PC-9 (cell line): ENCODE measurements at regions of chr19 and their contacts with region 1.

Region 1: DNA sequence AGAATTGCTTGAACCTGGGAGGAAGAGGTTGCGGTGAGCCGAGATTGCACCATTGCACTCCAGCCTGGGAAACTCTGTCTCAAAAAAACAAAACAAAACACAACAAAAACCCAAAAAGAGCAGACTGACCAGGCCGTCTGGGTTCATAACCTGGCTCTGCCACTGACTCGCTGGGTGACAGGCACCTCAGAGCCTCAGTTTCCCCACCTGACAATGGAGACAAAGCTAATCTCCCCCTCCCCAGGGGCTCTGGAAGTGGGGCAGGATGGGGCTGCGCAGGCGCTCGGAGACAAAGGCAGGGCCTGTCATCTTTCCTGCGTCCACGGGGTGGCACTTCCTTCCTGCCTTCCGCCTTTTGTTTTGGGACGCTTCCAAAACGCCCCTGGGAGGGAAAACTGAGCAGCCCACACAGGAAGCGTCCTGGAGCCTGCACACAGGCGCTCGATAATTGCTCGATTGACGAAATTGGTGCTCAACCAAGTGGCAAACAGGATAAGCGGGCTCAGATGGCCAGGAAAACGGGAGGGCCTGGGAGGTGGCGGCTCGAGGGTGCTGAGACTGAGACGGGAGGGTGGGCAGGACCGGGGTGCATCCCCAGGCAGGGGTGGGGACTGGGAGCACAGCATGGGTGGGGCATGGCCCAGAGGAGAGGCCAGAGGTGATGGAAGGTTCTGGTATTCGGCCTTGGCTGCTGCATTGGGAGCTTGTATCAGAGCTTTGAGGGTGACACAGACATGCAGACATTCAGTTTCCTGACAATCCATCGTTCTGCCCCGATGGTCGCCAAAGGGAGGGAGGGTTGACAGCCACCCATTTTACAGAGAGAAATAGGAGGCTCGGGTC is 17.8 kb downstream of the SPC24 start:
- DNase-seq: peak; percentile 76 to 89
- H3K4me3 ChIP-seq: peak overlapping the region; percentile 12; the same call in 1 of the 2 replicates
- H3K27ac ChIP-seq: peak overlapping the region; percentile 56
- H3K4me1 ChIP-seq: peaks cover 55% of the 10 kb centered on the region
- H3K27me3 ChIP-seq: no peaks in the 10 kb centered on the region
- CTCF ChIP-seq: peak; percentile 80

Region 2: DNA sequence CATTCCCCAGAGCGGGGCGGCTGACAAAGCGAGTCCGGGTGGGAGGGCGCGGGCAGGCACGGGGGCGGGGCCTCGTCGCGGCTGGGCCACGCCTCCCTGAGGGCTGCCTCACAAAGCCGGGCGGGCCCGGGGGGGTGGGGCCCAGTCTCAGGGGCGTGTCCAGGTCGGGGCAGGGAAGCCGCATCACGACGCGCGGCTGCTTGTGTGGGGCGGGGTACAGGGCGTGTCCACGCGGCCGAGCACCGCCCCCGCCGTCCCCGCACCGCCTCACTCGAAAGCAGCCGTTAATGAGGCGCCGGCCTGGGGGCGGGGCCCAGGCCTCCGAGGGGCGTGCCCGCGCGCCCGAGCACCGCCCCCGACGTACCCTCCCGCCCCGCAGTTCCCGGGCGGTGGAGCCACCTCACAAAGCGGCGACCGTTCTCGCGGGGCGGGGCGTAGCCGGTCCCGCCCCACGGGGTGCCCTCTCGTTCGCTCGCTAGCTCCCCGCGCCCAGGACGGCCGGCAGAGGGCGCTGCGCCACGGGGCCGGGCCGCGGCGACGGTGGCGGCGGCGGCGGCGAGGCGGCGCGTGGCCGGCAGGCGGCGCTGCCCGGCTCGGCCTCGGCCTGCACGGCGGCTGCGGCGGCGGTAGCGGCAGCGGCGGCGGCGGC is 266.7 kb before region 1 on chr19 and contains the start of gene CARM1:
- CTCF ChIA-PET with region 1: no interaction called
- POLR2A ChIA-PET with region 1: no interaction called
- intact Hi-C with region 1: loop called (anchors 5 kb)
- DNase-seq: peak; percentile 90 to 99
- H3K4me3 ChIP-seq: peak within 1 kb of the TSS; percentile 85
- H3K27ac ChIP-seq: peak within 1 kb of the TSS; percentile 9; the same call in 1 of the 2 replicates
- H3K4me1 ChIP-seq: peaks cover 17% of the 10 kb centered on the region
- H3K27me3 ChIP-seq: no peaks in the 10 kb centered on the region
- CTCF ChIP-seq: peak; percentile 45; the same call in 1 of the 2 replicates
- total RNA-seq, gene CARM1: 56.0 and 63.7 TPM in 2 replicates

Region 3: DNA sequence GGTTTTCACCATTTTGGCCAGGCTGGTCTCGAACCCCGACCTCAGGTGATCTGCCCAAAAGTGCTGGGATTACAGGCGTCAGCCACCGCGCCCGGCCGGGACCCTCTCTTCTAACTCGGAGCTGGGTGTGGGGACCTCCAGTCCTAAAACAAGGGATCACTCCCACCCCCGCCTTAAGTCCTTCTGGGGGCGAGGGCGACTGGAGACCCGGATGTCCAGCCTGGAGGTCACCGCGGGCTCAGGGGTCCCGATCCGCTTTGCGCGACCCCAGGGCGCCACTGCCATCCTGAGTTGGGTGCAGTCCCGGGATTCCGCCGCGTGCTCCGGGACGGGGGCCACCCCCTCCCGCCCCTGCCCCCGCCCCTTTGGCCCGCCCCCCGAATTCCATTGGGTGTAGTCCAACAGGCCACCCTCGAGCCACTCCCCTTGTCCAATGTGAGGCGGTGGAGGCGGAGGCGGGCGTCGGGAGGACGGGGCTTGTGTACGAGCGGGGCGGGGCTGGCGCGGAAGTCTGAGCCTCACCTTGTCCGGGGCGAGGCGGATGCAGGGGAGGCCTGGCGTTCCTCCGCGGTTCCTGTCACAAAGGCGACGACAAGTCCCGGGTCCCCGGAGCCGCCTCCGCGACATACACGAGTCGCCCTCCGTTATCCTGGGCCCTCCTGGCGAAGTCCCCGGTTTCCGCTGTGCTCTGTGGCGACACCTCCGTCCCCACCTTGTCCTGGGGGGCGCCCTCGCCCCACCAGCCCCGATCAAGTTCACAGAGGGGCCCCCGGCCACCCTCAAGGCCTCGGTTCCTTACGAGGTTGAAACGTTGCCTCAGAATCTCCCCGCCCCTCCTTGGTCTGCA is 47.5 kb before region 1 on chr19:
- CTCF ChIA-PET with region 1: no interaction called
- POLR2A ChIA-PET with region 1: no interaction called
- intact Hi-C with region 1: loop called (anchors 5 kb)
- DNase-seq: peak; percentile 93 to 96
- H3K4me3 ChIP-seq: peak overlapping the region; percentile 90
- H3K27ac ChIP-seq: peak overlapping the region; percentile 98
- H3K4me1 ChIP-seq: peaks cover 68% of the 10 kb centered on the region
- H3K27me3 ChIP-seq: no peaks in the 10 kb centered on the region
- CTCF ChIP-seq: no peak

Region 4: DNA sequence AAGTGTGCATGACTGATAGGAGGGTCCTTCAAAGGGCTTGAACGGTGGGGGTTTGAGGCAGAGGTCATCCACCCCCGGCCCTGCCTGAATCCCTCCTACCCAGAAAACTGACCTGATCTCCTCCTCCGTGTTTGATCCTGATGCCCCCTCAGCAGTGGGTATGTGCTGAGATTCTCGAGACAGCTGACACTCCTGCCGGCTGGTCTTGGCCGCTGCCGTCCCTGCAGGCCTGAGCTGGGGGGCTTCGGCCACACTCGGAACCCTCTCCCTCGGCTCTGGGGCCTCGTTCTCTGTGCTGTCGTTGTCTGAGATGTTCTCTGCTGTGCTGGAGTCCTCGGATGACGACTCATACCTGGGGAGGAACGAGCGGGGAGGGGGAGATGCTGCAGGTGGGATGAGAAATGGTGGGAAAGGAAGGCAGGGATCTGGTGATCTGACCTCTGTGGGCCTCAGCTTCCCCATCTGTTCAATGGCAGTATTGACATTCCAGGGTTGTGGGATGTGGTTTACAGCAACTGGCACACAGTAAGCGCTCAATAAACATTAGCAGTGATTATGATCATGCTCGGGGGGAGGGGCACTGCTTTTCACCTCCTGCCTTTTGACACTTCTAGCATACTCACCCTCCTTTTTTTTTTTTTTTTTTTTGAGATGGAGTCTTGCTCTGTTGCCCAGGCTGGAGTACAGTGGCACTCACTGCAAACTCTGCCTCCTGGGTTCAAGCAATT is 38.9 kb after region 1 on chr19:
- CTCF ChIA-PET with region 1: interaction called, 11 read pairs
- POLR2A ChIA-PET with region 1: no interaction called
- intact Hi-C with region 1: no loop called
- DNase-seq: no peak
- H3K4me3 ChIP-seq: no peak overlapping the region
- H3K27ac ChIP-seq: no peak overlapping the region
- H3K4me1 ChIP-seq: no peaks in the 10 kb centered on the region
- H3K27me3 ChIP-seq: no peaks in the 10 kb centered on the region
- CTCF ChIP-seq: no peak

Region 5: GRCh38 chr19:11203194-11204075 is 65.7 kb after region 1 on chr19:
- CTCF ChIA-PET with region 1: interaction called, 17 read pairs
- POLR2A ChIA-PET with region 1: no interaction called
- intact Hi-C with region 1: loop called (anchors 1 kb)
- DNase-seq: peak; percentile 69 to 75
- H3K4me3 ChIP-seq: no peak overlapping the region
- H3K27ac ChIP-seq: no peak overlapping the region
- H3K4me1 ChIP-seq: peaks cover 18% of the 10 kb centered on the region
- H3K27me3 ChIP-seq: no peaks in the 10 kb centered on the region
- CTCF ChIP-seq: peak; percentile 94

Region 6: DNA sequence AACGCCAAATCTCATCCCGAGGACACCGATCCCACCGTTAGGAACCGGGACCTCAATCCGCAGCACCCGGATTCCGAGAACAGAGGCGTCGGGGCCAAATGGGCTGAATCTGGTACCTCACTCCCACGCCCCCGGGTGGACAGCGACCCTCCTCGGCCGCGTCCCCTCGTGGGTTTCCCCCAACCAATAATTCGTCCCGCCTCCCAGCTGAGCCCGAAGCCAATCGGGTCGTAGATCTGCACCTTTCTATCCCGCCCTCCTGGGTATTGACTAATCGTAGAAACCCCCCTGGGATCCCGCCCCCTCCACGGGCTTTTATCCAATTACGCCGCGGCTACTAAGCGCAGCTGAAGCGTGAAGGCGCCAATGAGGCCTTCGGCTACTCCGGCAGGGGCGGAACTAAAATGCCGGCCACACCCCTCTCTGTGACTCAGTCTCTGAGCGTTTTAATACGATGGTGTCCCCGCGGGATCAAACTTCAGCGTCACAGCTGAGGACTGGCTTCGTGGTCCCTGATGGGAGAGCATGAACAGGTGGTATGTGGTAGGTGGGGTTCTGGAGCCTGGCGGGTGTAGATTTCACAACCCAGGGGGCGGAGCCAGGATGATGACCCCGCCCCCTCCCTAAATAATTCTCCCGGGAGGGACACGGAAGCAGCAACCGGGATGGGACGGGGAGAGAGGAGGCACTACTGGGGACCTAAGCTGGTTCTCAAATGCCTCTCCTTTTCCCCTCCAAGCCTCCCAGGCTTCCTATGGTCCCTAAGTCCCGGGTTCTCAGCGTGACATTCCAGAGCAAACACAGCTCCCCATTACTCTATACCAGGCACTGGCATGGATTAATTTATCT is 208.6 kb after region 1 on chr19 and contains the starts of genes CCDC159 and TMEM205:
- CTCF ChIA-PET with region 1: no interaction called
- POLR2A ChIA-PET with region 1: interaction called, 17 read pairs
- intact Hi-C with region 1: no loop called
- DNase-seq: peak; percentile 98 to 99
- H3K4me3 ChIP-seq: peak within 1 kb of the TSS; percentile 90
- H3K27ac ChIP-seq: peak within 1 kb of the TSS; percentile 67
- H3K4me1 ChIP-seq: peaks cover 36% of the 10 kb centered on the region
- H3K27me3 ChIP-seq: no peaks in the 10 kb centered on the region
- CTCF ChIP-seq: no peak
- total RNA-seq, gene CCDC159: 9.4 and 13.7 TPM in 2 replicates
- total RNA-seq, gene TMEM205: 80.3 and 90.6 TPM in 2 replicates